ENCODE measurements at regions of chr1 and their contacts with region 1.

Region 1: DNA sequence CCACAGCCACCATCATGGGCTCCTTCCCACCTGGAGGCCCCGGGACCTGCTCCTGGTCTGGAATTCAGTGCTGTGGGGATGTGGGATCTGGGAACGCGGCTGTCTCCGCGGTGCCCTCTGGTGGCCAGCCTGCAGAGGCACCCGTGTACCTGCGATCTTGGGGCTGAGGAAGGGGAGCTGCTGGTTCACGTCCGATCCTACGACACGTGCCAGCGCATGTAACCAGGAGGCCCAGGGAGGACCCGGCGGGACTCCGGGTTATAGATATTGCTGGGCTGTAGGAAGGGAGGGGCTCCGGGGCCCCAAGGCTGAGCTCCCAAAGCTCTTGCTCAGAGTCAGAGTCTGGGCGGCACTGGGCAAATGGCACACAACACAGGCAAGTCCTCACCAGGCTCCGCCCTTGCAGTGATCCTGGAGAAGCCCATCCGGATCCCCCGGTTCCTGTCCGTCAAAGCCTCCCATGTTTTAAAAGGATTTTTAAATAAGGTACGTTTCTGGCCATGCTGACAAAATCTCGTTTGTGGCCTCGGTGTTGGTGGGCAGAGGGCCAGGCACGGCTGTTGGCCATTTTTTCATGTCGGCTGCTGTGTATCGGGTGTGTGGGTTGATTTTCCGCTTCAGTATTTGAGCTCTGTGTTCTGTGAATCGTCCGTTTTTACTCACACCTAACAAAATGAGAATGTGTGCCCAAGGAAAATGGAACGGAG is 20.1 kb downstream of the FAAP20 start:
- DNase-seq: peak; percentile 79 to 88 (median 85)
- ATAC-seq: peak; percentile 72
- H3K4me3 ChIP-seq: no peak overlapping the region
- H3K27ac ChIP-seq: no peak overlapping the region
- H3K4me1 ChIP-seq: peaks cover 29 to 73% of the 10 kb centered on the region in 2 experiments
- H3K27me3 ChIP-seq: peaks cover 28 to 43% of the 10 kb centered on the region in 2 experiments
- CTCF ChIP-seq: peak; percentile 89 to 98 (median 90)
- EP300 ChIP-seq: no peak
- POLR2A ChIP-seq: no peak
- RAD21 ChIP-seq: peak; percentile 44 to 77

Region 2: DNA sequence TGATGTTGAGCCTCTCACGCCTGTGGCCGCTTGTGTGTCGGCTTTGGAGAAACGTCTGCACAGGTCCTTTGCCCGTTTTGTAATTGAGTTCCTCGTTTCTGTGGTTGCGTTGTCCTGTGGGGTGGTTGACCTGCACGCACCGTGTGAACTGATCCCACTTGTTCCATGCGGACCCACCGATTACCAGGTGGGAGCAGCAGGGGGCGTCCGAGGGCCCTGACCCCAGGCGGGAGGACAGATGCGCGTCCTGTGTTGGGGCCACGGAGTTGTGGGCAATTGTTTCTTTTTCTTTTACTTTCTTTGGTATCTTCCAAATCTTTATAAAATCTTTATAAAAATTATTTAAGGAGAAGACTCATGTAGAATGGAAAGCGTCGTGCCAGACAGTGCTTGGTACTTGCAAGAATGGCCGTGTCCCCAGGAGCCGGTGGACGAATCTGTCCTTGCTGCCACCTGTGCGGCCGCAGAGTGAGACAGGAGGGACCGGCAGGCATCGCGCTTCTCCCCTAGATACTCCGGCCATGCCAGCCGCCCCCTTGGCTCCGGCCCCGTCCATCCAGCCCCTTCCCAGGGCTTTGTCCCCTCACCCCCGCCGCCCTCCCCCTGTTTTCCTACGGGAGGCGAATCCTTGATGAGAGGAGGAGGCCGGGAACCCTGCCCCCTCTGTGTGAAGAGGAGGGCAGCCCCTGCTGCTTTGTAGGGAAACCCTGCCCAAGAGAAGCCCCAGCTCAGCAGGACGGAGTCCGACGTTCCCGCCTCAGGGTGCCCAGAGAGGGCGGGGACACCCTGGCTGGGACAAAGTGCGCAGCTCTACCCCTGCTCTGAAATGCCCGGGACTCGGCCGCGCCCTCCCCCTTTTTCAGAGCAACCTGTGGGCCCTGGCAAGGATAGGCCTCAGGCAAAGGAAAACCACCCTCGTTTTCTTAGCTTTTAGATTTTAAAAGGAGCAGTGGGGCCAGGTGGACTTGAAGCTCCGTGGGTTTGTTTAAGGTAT is 82.6 kb before region 1 on chr1:
- CTCF ChIA-PET with region 1: no interaction called
- POLR2A ChIA-PET with region 1: no interaction called
- in situ Hi-C with region 1: no loop called
- intact Hi-C with region 1: loop called (anchors 2 kb)
- DNase-seq: peak; percentile 79 to 90 (median 84)
- ATAC-seq: peak; percentile 94
- H3K4me3 ChIP-seq: no peak overlapping the region
- H3K27ac ChIP-seq: no peak overlapping the region
- H3K4me1 ChIP-seq: peaks cover 0 to 48% of the 10 kb centered on the region in 2 experiments; a peak in 2 of 5 replicates
- H3K27me3 ChIP-seq: peaks cover 43 to 90% of the 10 kb centered on the region in 2 experiments
- CTCF ChIP-seq: peak; percentile 80 to 95 (median 88)
- EP300 ChIP-seq: no peak
- POLR2A ChIP-seq: no peak
- RAD21 ChIP-seq: peak in 1 of 2 experiments; percentile 68; a peak in 2 of 4 replicates

Region 3: GRCh38 chr1:2133039-2133878 is 41.2 kb before region 1 on chr1:
- CTCF ChIA-PET with region 1: interaction called, 8 read pairs
- POLR2A ChIA-PET with region 1: no interaction called
- in situ Hi-C with region 1: no loop called
- intact Hi-C with region 1: loop called (anchors 2 kb)
- DNase-seq: peak; percentile 98 to 99 (median 99)
- ATAC-seq: peak; percentile 97
- H3K4me3 ChIP-seq: peak overlapping the region; percentile 35
- H3K27ac ChIP-seq: peak overlapping the region; percentile 34; the same call in 1 of the 3 replicates
- H3K4me1 ChIP-seq: peaks cover 8 to 49% of the 10 kb centered on the region in 2 experiments
- H3K27me3 ChIP-seq: peaks cover 53 to 69% of the 10 kb centered on the region in 2 experiments
- CTCF ChIP-seq: peak in 1 of 3 experiments; percentile 3; a peak in 1 of 6 replicates
- EP300 ChIP-seq: no peak
- POLR2A ChIP-seq: no peak
- RAD21 ChIP-seq: no peak

Region 4: GRCh38 chr1:2381741-2382620 is 207.5 kb after region 1 on chr1:
- CTCF ChIA-PET with region 1: interaction called, 7 read pairs
- POLR2A ChIA-PET with region 1: interaction called, 4 read pairs
- in situ Hi-C with region 1: no loop called
- intact Hi-C with region 1: loop called (anchors 1 kb)
- DNase-seq: peak; percentile 84 to 93 (median 92)
- ATAC-seq: peak; percentile 98
- H3K4me3 ChIP-seq: no peak overlapping the region
- H3K27ac ChIP-seq: no peak overlapping the region
- H3K4me1 ChIP-seq: peaks cover 0 to 52% of the 10 kb centered on the region in 2 experiments; a peak in 2 of 5 replicates
- H3K27me3 ChIP-seq: peaks cover 16 to 47% of the 10 kb centered on the region in 2 experiments; a peak in 4 of 5 replicates
- CTCF ChIP-seq: peak; percentile 91 to 96 (median 96)
- EP300 ChIP-seq: no peak
- POLR2A ChIP-seq: no peak
- RAD21 ChIP-seq: peak; percentile 92 to 99

Measured in K562 (cell line).